ENCODE measurements at regions of chr22 and their contacts with region 1.

Region 1: GRCh38 chr22:36301384-36301828 is 48.5 kb downstream of the APOL1 start:
- DNase-seq: peak in 41 of 42 donors; percentile 62 to 92 (median 81)

Region 2: GRCh38 chr22:36398621-36399469 is 97.4 kb after region 1 on chr22:
- intact Hi-C with region 1: no loop called
- DNase-seq: no peak

Region 3: DNA sequence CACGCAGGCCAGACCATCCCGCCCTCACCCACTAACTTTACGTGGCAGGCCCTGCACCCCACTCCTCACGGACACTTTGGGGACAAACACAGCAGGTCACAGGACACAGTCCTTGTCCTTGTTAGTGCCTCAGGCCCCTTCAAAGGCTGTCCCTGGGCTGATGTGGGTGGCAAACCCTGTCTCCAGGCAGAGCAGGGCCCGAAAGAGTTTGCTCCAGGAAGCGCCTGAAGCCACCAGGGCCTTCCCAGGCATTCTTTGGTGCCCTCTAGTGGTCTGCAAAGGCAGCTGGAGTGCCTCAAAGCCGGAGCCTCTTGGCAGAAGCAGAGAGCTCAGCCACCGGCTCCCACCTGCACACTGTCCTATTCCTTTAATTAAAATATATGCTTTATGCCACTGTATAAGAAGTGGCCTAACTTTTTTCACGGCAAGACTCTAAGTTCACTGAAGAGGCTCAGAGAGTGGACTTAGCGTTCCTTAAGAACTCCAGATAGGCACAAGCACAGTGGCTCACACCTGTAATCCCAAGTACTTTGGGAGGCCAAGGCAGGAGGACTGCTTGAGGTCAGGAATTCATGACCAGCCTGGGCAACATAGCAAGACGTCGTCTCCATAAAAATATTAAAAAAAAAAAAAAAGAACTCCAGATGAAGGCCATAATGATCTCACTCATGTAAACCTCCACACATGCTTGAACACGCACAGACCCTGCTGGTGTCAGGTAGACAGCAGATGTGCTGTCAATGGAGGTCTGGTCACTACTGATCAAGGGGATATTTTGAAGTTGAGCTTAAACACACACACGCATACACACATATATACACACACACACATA is 169.0 kb after region 1 on chr22:
- intact Hi-C with region 1: loop called (anchors 2 kb)
- DNase-seq: peak; percentile 62 to 93 (median 86)